Cardiac septum (tissue), 1 donor: ENCODE measurements at regions of chr17 and their contacts with region 1.

Region 1: DNA sequence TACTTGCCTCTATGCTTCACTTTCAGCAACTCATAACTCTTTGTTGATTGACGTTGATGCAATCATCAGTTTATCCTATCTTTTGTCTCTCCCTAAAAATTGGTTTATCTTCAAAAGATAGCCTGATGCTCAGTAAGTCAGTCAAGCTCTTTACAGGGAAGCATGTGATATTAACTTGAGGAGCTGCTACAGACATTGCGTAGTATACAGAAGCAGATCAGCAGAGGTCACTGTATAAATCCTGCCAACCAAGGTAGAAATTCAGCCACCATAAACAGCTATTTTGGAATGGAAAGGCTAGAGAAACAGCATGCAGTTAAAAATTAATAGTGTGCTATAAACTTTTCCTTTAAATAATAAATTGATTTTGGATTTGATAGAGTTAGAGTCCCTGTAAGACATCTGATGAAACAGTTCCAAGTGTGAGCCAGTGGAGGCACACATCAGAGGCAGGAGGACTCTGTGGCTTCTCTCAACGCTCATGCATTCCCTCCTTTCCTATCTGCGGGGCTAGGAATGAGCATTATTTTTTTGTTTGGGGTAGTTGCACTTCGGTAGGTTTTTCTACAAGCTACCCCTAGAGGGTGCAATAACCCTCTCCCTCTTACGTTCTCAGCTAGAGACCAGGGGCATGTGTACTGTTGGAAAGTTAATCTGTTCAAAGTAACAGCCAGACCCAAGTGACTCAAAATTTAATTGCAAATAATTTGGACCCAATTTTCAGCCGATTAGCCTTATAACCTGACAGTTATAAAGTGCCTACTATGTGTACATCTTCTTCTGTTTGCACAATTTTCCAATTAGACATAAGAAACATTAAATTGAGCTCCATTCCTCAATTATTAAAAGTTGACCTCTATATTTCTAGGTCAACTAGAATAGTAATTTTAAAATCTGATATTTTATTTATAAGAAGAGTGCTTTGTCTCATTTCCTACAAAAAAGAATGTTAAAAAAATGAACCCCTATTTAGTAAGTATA is 647.7 kb upstream of the SOX9 start:
- DNase-seq: no peak

Region 2: GRCh38 chr17:71118039-71118438 is 355.1 kb before region 1 on chr17:
- intact Hi-C with region 1: loop called (anchors 5 kb)
- DNase-seq: no peak

Region 3: GRCh38 chr17:71511266-71511995 is 38.3 kb after region 1 on chr17:
- intact Hi-C with region 1: no loop called
- DNase-seq: no peak

Region 4: GRCh38 chr17:72439893-72440502 is 966.9 kb after region 1 on chr17:
- intact Hi-C with region 1: loop called (anchors 5 kb)
- DNase-seq: no peak